HCT116 (cell line): ENCODE measurements at regions of chr4 and their contacts with region 1.

Region 1: DNA sequence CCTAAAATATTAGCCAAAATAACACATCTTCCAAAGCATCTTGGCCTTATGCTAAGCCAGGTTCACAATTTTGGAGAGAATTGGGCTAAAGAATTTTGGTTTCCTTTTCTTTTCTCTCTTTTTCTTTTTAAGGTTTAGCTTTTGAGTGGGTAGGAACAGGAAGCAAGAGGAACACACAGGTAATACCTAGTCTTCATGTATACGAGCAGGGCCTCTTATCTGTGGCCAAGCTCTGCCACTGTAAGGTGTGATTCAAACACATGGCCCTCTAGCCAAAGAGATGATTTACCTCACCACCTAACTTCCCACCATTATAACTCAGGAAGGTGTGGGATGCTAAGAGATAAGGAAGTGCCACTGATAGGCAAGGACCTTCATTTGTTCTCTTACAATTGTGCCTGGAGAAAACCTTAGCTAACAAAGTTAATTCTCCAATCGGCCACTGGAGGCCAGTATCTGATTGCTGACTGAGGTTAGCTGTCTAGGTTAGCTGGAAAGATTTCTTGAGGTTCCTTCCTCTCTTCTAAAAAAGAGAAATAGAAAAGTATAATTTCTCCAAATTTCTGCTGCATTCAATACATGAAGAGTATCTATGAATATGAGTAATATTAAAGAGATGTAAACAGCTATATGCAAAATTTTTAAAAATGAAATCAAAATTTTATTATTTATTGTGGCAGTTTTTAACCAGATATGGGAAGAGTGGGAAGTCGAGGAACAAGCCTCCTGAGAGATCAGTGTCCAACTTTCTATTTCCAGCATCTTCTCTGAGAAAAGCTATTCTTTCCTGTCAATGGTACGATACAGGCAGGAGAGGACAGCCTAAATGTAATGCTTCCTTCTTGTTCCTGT is 30.1 kb upstream of the BBS7 start:
- DNase-seq: peak; percentile 56
- ATAC-seq: peak; percentile 90
- H3K4me3 ChIP-seq: no peak overlapping the region
- H3K27ac ChIP-seq: no peak overlapping the region
- H3K4me1 ChIP-seq: peaks cover 0 to 4% of the 10 kb centered on the region in 2 experiments; a peak in 1 of 4 replicates
- H3K27me3 ChIP-seq: no peaks in the 10 kb centered on the region
- CTCF ChIP-seq: peak; percentile 74 to 86 (median 78)
- POLR2A ChIP-seq: no peak
- RAD21 ChIP-seq: peak; percentile 94

Region 2: DNA sequence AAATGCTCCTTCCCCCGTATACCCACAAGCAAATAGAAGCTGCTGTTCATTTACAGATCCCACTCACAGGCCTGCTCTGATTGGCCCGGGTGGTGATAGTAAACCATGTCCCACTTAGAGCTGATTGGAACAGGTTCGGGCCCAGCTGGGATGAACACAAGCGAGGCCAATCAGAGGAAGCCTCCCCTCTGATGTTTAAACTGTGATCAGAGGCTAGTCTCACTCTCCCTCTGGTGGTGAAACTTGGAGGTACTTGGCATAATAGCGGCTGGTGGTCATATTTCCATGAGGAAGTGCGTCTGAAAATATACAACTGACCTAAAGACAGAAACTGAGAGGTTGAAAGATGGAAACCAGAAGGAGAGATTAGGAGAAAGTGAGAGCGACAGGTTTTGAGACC is 103.0 kb after region 1 on chr4:
- CTCF ChIA-PET with region 1: interaction called, 9 read pairs
- POLR2A ChIA-PET with region 1: no interaction called
- RAD21 ChIA-PET with region 1: no interaction called
- intact Hi-C with region 1: loop called (anchors 1 kb)
- DNase-seq: peak; percentile 42
- ATAC-seq: peak; percentile 96
- H3K4me3 ChIP-seq: no peak overlapping the region
- H3K27ac ChIP-seq: no peak overlapping the region
- H3K4me1 ChIP-seq: no peaks in the 10 kb centered on the region
- H3K27me3 ChIP-seq: no peaks in the 10 kb centered on the region
- CTCF ChIP-seq: peak; percentile 23 to 57 (median 51); a peak in 4 of 6 replicates
- POLR2A ChIP-seq: no peak
- RAD21 ChIP-seq: peak; percentile 48

Region 3: DNA sequence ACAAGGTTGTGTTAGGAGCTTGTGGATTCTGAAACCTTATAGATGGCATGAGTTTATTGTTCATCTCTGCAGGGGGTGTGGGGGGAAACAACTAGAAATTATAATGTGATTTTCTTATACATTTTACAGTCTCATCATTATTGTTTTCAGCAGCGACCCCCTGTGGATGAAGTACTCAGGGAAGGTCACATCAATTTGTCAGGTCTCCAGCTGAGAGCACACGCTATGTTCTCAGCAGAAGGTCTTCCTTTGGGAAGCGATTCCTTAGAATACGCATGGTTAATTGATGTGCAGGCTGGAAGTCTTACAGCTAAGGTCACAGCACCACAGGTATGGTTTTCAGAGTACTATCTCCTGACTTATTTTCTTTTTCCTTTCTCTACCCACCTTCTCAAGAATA is 324.0 kb after region 1 on chr4:
- CTCF ChIA-PET with region 1: interaction called, 5 read pairs
- POLR2A ChIA-PET with region 1: no interaction called
- RAD21 ChIA-PET with region 1: no interaction called
- intact Hi-C with region 1: loop called (anchors 1 kb)
- DNase-seq: no peak
- ATAC-seq: 0 out of 2 replicates have a peak, but pooled peaks have one; percentile 38
- H3K4me3 ChIP-seq: no peak overlapping the region
- H3K27ac ChIP-seq: no peak overlapping the region
- H3K4me1 ChIP-seq: no peaks in the 10 kb centered on the region
- H3K27me3 ChIP-seq: no peaks in the 10 kb centered on the region
- CTCF ChIP-seq: peak in 2 of 3 experiments; percentile 30 to 48; a peak in 3 of 6 replicates
- POLR2A ChIP-seq: no peak
- RAD21 ChIP-seq: peak; percentile 39

Region 4: GRCh38 chr4:122450847-122451246 is 550.5 kb after region 1 on chr4:
- CTCF ChIA-PET with region 1: interaction called, 3 read pairs
- POLR2A ChIA-PET with region 1: no interaction called
- RAD21 ChIA-PET with region 1: no interaction called
- intact Hi-C with region 1: loop called (anchors 5 kb)
- DNase-seq: peak; percentile 73
- ATAC-seq: peak; percentile 100
- H3K4me3 ChIP-seq: no peak overlapping the region
- H3K27ac ChIP-seq: no peak overlapping the region
- H3K4me1 ChIP-seq: no peaks in the 10 kb centered on the region
- H3K27me3 ChIP-seq: no peaks in the 10 kb centered on the region
- CTCF ChIP-seq: peak; percentile 53 to 68 (median 66); a peak in 5 of 6 replicates
- POLR2A ChIP-seq: no peak
- RAD21 ChIP-seq: peak; percentile 70

Region 5: DNA sequence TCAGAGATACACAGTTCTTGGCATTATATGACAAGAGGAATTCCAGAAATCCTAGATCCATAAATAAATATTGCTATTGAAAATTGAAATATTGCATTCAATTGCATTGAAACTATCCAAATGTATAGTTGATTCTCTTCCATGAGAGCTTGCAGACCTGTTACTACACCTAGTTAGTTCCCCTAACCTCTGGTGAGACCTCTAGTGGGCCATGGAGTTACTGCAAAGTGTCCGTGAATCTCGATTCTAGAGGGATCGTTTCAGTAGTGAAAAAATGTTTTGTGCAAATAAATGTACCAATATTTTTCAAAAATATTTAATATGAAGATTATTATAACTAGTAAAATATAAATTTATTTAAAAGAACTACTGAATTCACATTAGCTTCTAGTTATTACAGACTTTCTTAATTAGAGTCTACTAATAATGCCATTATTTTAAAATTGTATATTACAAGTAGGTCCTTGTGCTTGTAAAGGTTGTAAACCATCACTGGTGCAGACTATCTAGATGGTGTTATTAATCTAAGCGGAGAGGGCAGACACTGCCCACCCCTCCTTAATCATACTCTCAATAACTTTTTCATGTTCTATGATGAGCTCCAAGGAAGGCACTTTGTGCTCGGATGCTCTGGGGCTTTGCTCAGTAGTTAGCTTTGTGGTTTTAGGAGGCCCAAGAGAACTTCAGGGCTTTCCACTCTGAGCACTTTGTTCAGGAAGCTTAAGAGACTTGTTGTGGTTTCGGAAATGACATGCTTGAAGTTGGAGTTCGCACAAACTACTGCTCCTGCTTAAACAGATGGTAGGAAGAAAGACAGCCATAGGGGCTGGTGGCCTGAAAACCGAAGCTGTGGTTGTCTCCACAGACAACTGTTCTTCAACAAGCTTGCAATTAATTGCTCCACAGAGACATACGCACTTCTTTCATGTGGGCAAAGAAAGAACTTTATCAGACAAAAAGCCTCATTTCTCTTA is 677.7 kb after region 1 on chr4:
- CTCF ChIA-PET with region 1: interaction called, 52 read pairs
- POLR2A ChIA-PET with region 1: no interaction called
- RAD21 ChIA-PET with region 1: interaction called, 5 to 12 read pairs
- intact Hi-C with region 1: loop called (anchors 1 kb)
- DNase-seq: peak; percentile 48
- ATAC-seq: peak; percentile 87
- H3K4me3 ChIP-seq: no peak overlapping the region
- H3K27ac ChIP-seq: no peak overlapping the region
- H3K4me1 ChIP-seq: no peaks in the 10 kb centered on the region
- H3K27me3 ChIP-seq: no peaks in the 10 kb centered on the region
- CTCF ChIP-seq: peak; percentile 38 to 87 (median 73); a peak in 5 of 6 replicates
- POLR2A ChIP-seq: no peak
- RAD21 ChIP-seq: peak; percentile 37

Region 6: DNA sequence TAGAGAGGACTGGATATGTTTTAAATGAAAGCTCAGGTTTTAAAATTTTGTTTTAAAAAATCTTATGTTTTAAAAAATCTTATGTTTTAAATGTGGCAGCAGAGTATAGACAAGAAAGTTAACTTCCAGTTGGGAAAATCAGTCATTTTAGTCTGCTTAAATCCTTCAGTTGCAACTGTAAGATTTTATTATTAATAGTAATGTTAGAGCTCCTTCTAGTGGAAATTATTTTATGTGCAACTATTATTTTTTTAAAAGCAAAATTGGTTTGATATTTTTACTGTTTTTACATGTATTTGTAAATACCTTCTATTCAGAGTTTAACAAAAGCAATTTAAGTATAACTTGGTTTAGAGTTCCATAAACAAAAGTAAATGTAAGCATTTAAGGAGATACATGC is 1030.5 kb after region 1 on chr4:
- CTCF ChIA-PET with region 1: no interaction called
- POLR2A ChIA-PET with region 1: no interaction called
- RAD21 ChIA-PET with region 1: no interaction called
- intact Hi-C with region 1: loop called (anchors 2 kb)
- DNase-seq: no peak
- ATAC-seq: no peak
- H3K4me3 ChIP-seq: no peak overlapping the region
- H3K27ac ChIP-seq: no peak overlapping the region
- H3K4me1 ChIP-seq: no peaks in the 10 kb centered on the region
- H3K27me3 ChIP-seq: no peaks in the 10 kb centered on the region
- CTCF ChIP-seq: peak in 2 of 3 experiments; percentile 55 to 64; a peak in 3 of 6 replicates
- POLR2A ChIP-seq: no peak
- RAD21 ChIP-seq: peak; percentile 60